ENCODE measurements at regions of chr19 and their contacts with region 1.

Region 1: GRCh38 chr19:12801466-12802266 is at the starts of genes PRDX2 and THSD8:
- DNase-seq: peak; percentile 88
- total RNA-seq, gene PRDX2: 595 TPM
- total RNA-seq, gene THSD8: 0.94 TPM

Region 2: GRCh38 chr19:12656899-12657571 is 144.6 kb before region 1 on chr19:
- intact Hi-C with region 1: no loop called
- DNase-seq: no peak

Region 3: DNA sequence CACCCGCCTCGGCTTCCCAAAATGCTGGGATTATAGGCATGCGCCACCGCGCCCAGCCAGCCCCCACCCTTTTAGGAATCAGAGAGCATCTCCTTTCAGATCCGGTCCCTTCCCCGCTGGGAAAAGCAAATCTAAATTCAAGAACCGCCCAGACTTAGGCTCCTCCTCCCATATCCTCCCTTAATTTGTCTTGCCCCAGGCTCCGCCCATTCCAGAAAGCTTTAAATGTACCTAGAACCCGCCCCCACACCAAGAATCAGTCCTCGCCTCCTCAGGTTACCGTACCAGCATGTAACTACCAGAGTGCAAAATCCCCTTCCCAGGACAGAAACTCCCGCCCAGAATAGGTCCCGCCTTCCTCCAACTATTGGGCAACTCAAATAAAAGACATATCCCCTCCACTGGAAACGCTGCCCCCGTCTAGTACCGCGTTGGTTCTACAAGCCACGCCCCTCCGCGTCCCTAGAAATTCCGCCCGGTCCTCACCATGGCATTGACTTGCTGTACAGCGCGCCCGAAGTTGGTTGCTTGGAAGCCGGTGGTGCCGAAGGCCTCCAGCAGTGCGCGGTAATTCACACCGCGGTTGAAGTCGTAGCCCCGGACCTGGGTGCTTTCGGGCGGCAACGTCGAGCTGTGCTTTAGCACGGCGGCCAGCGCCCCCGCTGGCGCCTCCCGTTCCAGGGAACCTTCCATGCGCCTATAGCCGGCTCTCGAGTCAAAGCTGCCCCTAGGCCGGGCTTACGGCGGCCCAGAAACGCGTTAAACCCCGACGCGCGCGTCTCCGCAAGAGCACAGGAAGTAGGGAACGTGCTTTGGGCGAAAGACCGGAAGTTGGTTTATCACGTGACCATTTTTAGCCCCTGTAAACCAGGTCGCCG is 120.4 kb before region 1 on chr19 and contains the start of gene DHPS:
- intact Hi-C with region 1: loop called (anchors 5 kb)
- DNase-seq: peak; percentile 95
- total RNA-seq, gene DHPS: 49.0 TPM

Region 4: GRCh38 chr19:12838182-12838885 is 36.7 kb after region 1 on chr19 and contains the start of gene MAST1:
- intact Hi-C with region 1: loop called (anchors 5 kb)
- DNase-seq: no peak
- total RNA-seq, gene MAST1: 0.65 TPM

Region 5: DNA sequence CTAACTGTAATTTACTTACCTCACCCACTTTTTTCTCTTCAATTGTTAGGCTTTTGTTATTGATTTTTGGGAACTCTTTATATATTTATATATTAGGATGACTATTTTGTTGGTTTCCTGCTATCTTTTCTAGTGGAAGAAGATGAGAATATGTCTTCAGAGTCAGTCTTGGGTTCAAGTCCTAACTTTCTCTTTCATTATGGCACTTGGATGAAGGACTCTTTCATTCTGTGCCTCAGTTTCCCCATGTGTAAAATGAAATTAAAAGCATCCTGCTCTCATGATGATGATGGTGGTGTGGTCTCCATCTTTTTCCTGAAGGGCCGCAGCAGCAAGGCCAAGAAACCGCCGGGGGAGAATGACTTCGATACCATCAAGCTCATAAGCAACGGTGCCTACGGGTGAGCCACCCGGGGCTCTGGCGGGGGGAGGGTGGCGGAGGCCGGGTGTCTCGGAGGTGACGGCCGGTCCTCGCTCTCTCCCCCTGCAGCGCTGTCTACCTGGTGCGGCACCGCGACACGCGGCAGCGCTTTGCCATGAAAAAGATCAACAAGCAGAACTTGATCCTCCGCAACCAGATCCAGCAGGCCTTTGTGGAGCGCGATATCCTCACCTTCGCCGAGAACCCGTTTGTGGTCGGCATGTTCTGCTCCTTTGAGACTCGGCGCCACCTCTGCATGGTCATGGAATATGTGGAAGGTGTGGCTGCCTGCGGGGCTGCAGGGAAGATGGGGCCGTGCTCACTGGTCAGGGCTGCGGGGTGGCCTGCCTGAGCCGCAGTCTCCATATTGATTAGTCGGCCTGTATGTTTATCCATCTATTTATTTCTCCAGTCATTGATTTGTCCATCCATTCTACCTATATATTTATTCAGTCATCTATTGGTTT is 56.6 kb after region 1 on chr19:
- intact Hi-C with region 1: no loop called
- DNase-seq: no peak

Region 6: GRCh38 chr19:13134626-13135025 is 333.0 kb after region 1 on chr19:
- intact Hi-C with region 1: no loop called
- DNase-seq: no peak